Body of pancreas (tissue), 4 donors: ENCODE measurements at regions of chr13 and their contacts with region 1.

Region 1: DNA sequence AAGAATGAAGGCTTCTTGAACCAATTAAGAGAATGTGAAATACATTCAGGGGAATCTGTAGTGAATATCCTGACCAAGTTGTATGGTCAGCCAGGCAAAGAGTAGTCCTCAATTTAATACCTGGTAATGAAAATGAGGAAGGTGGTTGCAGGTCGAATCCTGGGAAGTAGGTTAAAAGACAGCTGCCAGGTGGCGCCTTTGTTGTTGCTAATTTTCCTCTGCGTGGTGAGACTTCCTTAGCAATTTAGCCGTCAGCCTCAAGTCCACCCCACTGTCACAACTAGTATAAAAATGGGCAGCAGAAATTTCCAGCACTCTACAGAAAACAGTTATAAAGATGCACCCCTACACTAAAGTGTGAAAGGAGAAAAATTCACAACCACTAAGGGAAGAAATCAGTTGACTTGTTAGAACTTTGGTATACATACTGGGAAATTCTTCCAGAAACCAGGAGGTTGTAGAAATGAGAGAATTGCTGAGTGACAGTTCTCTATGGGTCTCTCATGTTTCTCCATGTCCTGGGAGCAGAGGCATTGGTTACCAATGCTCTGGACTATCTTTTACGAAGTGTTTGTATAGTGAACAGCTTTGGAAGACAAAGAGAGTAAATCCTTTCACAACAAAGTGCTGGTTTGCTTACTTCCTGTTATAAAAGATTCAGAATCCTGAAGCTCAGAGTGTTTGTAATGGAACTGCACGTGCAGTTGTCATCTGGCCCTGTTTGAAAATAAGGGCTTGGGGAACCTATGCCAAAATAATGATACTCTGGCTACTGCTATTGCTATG is 235.9 kb downstream of the NHLRC3 start:
- DNase-seq: peak in 3 of 4 donors; percentile 22 to 54 (median 34)
- ATAC-seq: no peak
- H3K4me3 ChIP-seq: no peak overlapping the region
- H3K27ac ChIP-seq: no peak overlapping the region
- H3K4me1 ChIP-seq: peaks cover 7% of the 10 kb centered on the region
- H3K27me3 ChIP-seq: no peaks in the 10 kb centered on the region
- CTCF ChIP-seq: peak in 4 of 7 experiments; percentile 19 to 38 (median 31)
- POLR2A ChIP-seq: no peak

Region 2: GRCh38 chr13:39602614-39603366 is 328.6 kb after region 1 on chr13 and contains the start of gene LHFPL6:
- intact Hi-C with region 1: loop called (anchors 10 kb)
- DNase-seq: peak; percentile 65 to 79 (median 72)
- ATAC-seq: peak; percentile 91
- H3K4me3 ChIP-seq: peak within 1 kb of the TSS; percentile 16 to 80
- H3K27ac ChIP-seq: peak within 1 kb of the TSS; percentile 33 to 71 (median 44)
- H3K4me1 ChIP-seq: peaks cover 11% of the 10 kb centered on the region
- H3K27me3 ChIP-seq: peaks cover 0 to 5% of the 10 kb centered on the region in 2 donors
- CTCF ChIP-seq: peak in 1 of 7 experiments; percentile 12
- POLR2A ChIP-seq: peak in 2 of 3 donors; percentile 24 to 39
- total RNA-seq, gene LHFPL6: 18.4 to 30.7 TPM